ENCODE measurements at regions of chr3 and their contacts with region 1.

Region 1: GRCh38 chr3:142447852-142448823 is at the start of gene XRN1:
- DNase-seq: peak; percentile 94
- ATAC-seq: peak; percentile 98
- H3K4me3 ChIP-seq: peak within 1 kb of the TSS; percentile 85 to 100 (median 98)
- H3K4me3 Mint-ChIP-seq: peak within 1 kb of the TSS; percentile 99
- H3K27ac ChIP-seq: peak within 1 kb of the TSS; percentile 97 to 100
- H3K27ac Mint-ChIP-seq: peak within 1 kb of the TSS; percentile 100
- H3K4me1 ChIP-seq: peaks cover 18 to 24% of the 10 kb centered on the region in 2 donors
- H3K4me1 Mint-ChIP-seq: peaks cover 41% of the 10 kb centered on the region
- H3K27me3 ChIP-seq: no peaks in the 10 kb centered on the region
- H3K27me3 Mint-ChIP-seq: no peaks in the 10 kb centered on the region
- CTCF ChIP-seq: no peak
- total RNA-seq, gene XRN1: 78.6 and 91.8 TPM in 2 replicates

Region 2: GRCh38 chr3:141487521-141488252 is 960.5 kb before region 1 on chr3:
- CTCF ChIA-PET with region 1: no interaction called
- POLR2A ChIA-PET with region 1: no interaction called
- intact Hi-C with region 1: loop called (anchors 5 kb)
- DNase-seq: peak; percentile 91
- ATAC-seq: peak; percentile 70
- H3K4me3 ChIP-seq: peak overlapping the region; percentile 48 to 96 (median 67)
- H3K4me3 Mint-ChIP-seq: peak overlapping the region; percentile 88
- H3K27ac ChIP-seq: peak overlapping the region; percentile 83 to 91
- H3K27ac Mint-ChIP-seq: peak overlapping the region; percentile 93
- H3K4me1 ChIP-seq: peaks cover 45 to 66% of the 10 kb centered on the region in 2 donors
- H3K4me1 Mint-ChIP-seq: peaks cover 70% of the 10 kb centered on the region
- H3K27me3 ChIP-seq: no peaks in the 10 kb centered on the region
- H3K27me3 Mint-ChIP-seq: no peaks in the 10 kb centered on the region
- CTCF ChIP-seq: no peak

Region 3: DNA sequence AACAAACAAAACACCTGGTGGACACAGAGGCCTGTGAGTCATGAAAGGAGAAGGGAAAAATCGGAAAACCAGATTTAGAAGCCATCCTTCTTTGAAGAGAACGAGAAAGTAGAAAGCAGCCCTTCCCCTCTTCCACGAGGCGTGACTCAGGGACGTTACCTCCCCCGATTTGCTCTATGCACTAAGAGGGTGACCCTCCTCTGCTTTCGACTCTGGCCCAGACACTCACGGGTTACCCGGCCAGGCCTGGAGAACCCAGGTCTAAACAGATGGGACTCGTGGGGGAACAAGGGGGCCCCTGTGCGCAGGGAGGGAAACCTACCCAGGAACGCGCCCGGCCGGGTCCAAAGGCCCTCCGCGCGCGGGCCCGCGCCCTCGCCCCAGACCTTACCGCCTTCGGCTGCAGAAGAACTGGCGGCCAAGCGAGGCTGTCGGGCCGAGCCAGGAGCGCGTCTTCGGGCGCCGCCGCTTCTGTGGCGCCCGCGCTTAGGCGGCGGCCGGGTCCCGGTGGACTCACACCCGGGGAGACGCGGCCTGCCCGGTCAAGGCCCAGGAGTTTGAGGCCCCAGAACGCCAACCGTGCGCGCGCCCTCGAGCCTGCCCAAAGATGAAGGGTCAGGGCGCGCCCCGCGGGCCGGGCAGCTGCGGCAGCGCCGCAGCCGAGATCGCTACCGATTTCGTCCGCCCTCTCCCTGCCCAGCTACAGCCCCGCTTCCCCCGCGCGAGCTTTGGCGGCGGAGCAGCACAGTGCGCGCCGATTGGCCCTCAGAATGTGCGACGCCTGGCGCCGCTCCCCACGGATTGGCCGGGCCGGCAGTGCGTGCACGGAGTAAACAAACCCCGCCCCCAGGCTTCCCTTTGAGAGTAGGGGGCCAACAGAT is 299.1 kb before region 1 on chr3 and contains the start of gene TFDP2:
- CTCF ChIA-PET with region 1: no interaction called
- POLR2A ChIA-PET with region 1: no interaction called
- intact Hi-C with region 1: loop called (anchors 1 kb)
- DNase-seq: peak; percentile 88
- ATAC-seq: peak; percentile 98
- H3K4me3 ChIP-seq: peak within 1 kb of the TSS; percentile 56 to 85 (median 74)
- H3K4me3 Mint-ChIP-seq: peak within 1 kb of the TSS; percentile 88
- H3K27ac ChIP-seq: peak within 1 kb of the TSS in 1 of 2 donors; percentile 76
- H3K27ac Mint-ChIP-seq: peak within 1 kb of the TSS; percentile 87
- H3K4me1 ChIP-seq: peaks cover 7 to 15% of the 10 kb centered on the region in 2 donors
- H3K4me1 Mint-ChIP-seq: peaks cover 19% of the 10 kb centered on the region
- H3K27me3 ChIP-seq: no peaks in the 10 kb centered on the region
- H3K27me3 Mint-ChIP-seq: no peaks in the 10 kb centered on the region
- CTCF ChIP-seq: no peak
- total RNA-seq, gene TFDP2: 31.7 and 32.9 TPM in 2 replicates

Region 4: DNA sequence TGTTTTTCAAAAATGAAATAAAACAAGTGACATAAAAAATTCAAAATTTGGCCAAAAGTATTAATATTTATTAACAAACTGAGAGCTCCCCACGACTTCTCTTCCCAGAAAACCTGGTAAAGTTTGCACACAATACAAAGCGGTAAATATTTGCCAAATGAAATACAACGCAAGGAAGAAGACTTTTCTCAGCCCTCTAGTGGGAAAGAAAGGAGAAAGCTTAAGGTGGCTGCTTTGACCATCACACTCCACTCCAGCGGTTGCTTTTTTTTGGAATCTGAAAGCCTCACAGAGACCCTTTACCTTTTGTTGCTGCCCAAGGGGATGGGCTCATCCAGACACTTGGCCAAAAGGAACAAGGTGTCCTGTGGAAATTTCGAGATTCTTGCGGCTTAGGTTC is 221.7 kb before region 1 on chr3:
- CTCF ChIA-PET with region 1: no interaction called
- POLR2A ChIA-PET with region 1: no interaction called
- intact Hi-C with region 1: loop called (anchors 2 kb)
- DNase-seq: no peak
- ATAC-seq: no peak
- H3K4me3 ChIP-seq: no peak overlapping the region
- H3K4me3 Mint-ChIP-seq: peak overlapping the region; percentile 70
- H3K27ac ChIP-seq: no peak overlapping the region
- H3K27ac Mint-ChIP-seq: peak overlapping the region; percentile 32
- H3K4me1 ChIP-seq: peaks cover 3 to 8% of the 10 kb centered on the region in 2 donors
- H3K4me1 Mint-ChIP-seq: peaks cover 9% of the 10 kb centered on the region
- H3K27me3 ChIP-seq: no peaks in the 10 kb centered on the region
- H3K27me3 Mint-ChIP-seq: no peaks in the 10 kb centered on the region
- CTCF ChIP-seq: no peak

Region 5: DNA sequence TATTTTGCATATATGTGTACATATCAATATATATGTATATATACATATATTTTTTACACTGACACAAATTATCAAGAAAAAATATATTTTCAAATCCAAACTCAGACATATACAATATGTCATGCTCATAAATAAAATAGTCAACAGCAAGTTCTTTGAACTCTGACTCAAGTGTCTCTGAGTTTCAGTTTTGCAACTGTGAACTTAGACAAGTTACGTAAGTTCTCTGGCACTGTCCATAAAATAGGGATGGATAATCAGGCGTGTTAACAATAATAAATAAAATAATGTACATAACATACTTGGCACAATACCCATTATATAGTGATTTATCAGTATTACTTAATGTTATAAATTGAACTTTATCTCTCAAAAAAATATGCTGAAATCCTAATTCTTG is 11.8 kb after region 1 on chr3:
- CTCF ChIA-PET with region 1: no interaction called
- POLR2A ChIA-PET with region 1: no interaction called
- intact Hi-C with region 1: no loop called
- DNase-seq: no peak
- ATAC-seq: no peak
- H3K4me3 ChIP-seq: no peak overlapping the region
- H3K4me3 Mint-ChIP-seq: no peak overlapping the region
- H3K27ac ChIP-seq: no peak overlapping the region
- H3K27ac Mint-ChIP-seq: no peak overlapping the region
- H3K4me1 ChIP-seq: no peaks in the 10 kb centered on the region
- H3K4me1 Mint-ChIP-seq: no peaks in the 10 kb centered on the region
- H3K27me3 ChIP-seq: no peaks in the 10 kb centered on the region
- H3K27me3 Mint-ChIP-seq: no peaks in the 10 kb centered on the region
- CTCF ChIP-seq: no peak

Region 6: DNA sequence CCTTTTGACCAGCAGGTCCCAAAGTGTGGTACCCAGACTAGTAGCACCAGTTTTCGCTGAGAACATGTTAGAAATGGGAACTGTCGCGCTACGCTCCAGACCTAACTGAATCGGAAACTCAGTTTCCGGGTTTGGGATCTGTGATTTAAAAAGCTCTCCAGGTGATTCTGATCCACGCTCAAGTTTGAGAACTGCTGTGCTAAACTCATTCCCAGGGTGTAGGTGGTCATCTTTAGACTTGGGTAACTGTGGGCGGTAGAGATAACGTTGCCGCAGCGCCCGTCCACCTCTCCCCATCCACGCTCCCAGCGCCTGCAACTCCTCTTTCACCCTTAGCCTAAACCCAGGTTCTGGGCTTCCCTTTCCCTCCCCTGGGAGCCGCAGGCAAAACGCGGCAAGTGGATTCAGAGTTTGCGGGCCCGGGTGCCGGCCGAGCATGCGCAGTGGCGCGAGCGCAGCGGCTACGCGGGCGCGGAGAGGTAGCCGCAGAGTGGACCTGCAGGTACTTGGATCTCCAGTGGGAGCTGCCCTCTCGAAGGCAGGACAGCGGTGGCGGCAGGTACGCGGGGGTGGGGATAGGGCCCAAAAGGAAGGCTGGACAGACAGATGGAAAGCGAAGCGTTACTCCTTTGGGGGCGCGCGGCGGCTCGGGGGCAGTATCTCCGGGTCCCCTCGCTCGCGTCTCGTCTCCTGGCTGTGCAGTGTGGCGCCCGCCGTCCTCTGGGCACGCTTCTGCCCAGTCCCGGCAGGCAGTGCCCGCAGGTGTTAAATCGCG is 148.0 kb after region 1 on chr3 and contains the start of gene PLS1:
- CTCF ChIA-PET with region 1: no interaction called
- POLR2A ChIA-PET with region 1: no interaction called
- intact Hi-C with region 1: loop called (anchors 5 kb)
- DNase-seq: peak; percentile 87
- ATAC-seq: peak; percentile 87
- H3K4me3 ChIP-seq: peak within 1 kb of the TSS; percentile 68 to 77 (median 72)
- H3K4me3 Mint-ChIP-seq: peak within 1 kb of the TSS; percentile 99
- H3K27ac ChIP-seq: peak within 1 kb of the TSS in 1 of 2 donors; percentile 27
- H3K27ac Mint-ChIP-seq: peak within 1 kb of the TSS; percentile 87
- H3K4me1 ChIP-seq: peaks cover 10 to 15% of the 10 kb centered on the region in 2 donors
- H3K4me1 Mint-ChIP-seq: peaks cover 19% of the 10 kb centered on the region
- H3K27me3 ChIP-seq: peaks cover 0 to 7% (median 2%) of the 10 kb centered on the region in 4 experiments
- H3K27me3 Mint-ChIP-seq: peaks cover 12% of the 10 kb centered on the region
- CTCF ChIP-seq: no peak
- total RNA-seq, gene PLS1: 0.73 and 0.74 TPM in 2 replicates

Region 7: DNA sequence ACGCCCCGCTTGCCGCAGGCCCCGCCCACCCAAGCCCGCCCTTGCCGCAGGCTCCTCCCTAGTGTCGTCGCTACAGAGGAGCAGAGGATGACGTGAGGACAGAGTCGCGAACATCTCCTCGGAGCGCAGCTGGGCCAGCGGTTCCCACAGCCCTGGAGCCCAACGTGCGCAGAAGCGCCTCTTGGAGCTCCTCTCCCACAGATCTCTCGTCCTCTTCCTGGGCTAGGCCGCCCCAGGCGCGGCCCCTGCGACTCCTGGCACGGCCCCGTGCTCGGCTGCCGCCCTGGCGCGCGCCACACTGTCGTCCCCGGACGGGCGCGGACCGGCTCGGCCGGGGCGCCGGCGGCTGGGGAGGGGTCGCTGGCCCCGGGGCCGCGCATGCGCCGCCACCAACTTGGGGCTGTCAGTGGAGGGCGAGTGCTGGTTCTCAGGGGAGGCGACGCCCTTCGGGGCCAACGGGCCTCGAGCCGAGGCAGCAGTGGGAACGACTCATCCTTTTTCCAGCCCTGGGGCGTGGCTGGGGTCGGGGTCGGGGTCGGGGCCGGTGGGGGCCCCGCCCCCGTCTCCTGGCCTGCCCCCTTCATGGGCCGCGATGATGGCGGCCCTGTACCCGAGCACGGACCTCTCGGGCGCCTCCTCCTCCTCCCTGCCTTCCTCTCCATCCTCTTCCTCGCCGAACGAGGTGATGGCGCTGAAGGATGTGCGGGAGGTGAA is 276.0 kb after region 1 on chr3 and contains the start of gene TRPC1:
- CTCF ChIA-PET with region 1: no interaction called
- POLR2A ChIA-PET with region 1: interaction called, 3 read pairs
- intact Hi-C with region 1: loop called (anchors 5 kb)
- DNase-seq: peak; percentile 88
- ATAC-seq: peak; percentile 93
- H3K4me3 ChIP-seq: peak within 1 kb of the TSS; percentile 44 to 76 (median 65)
- H3K4me3 Mint-ChIP-seq: peak within 1 kb of the TSS; percentile 92
- H3K27ac ChIP-seq: peak within 1 kb of the TSS in 1 of 2 donors; percentile 41
- H3K27ac Mint-ChIP-seq: peak within 1 kb of the TSS; percentile 81
- H3K4me1 ChIP-seq: peaks cover 8 to 11% of the 10 kb centered on the region in 2 donors
- H3K4me1 Mint-ChIP-seq: peaks cover 13% of the 10 kb centered on the region
- H3K27me3 ChIP-seq: peaks cover 0 to 13% (median 10%) of the 10 kb centered on the region in 4 experiments
- H3K27me3 Mint-ChIP-seq: peaks cover 33% of the 10 kb centered on the region
- CTCF ChIP-seq: no peak
- total RNA-seq, gene TRPC1: 3.3 and 3.8 TPM in 2 replicates

Region 8: DNA sequence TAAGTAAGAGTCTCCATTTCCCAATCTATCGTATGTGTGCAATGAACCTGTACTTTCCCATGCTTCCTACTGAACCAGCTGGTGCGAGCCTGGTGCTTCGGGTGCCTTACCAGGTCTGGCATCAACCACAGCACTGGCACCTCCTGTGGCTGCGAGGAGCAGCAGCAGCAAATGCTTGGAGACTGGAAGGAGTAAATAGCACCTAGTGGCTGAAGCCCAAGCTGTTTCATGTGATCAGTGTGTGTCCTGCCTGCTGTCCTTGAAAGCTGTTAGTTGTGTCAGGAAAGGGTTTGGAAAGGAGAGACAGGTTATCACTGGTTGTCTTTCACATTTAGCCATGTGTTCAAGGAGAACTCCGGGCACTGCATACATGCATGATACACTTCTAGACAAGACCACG is 408.9 kb after region 1 on chr3:
- CTCF ChIA-PET with region 1: no interaction called
- POLR2A ChIA-PET with region 1: no interaction called
- intact Hi-C with region 1: no loop called
- DNase-seq: no peak
- ATAC-seq: no peak
- H3K4me3 ChIP-seq: no peak overlapping the region
- H3K4me3 Mint-ChIP-seq: no peak overlapping the region
- H3K27ac ChIP-seq: no peak overlapping the region
- H3K27ac Mint-ChIP-seq: no peak overlapping the region
- H3K4me1 ChIP-seq: no peaks in the 10 kb centered on the region
- H3K4me1 Mint-ChIP-seq: no peaks in the 10 kb centered on the region
- H3K27me3 ChIP-seq: peaks cover 0 to 5% (median 0%) of the 10 kb centered on the region in 4 experiments
- H3K27me3 Mint-ChIP-seq: peaks cover 23% of the 10 kb centered on the region
- CTCF ChIP-seq: no peak

Region 9: DNA sequence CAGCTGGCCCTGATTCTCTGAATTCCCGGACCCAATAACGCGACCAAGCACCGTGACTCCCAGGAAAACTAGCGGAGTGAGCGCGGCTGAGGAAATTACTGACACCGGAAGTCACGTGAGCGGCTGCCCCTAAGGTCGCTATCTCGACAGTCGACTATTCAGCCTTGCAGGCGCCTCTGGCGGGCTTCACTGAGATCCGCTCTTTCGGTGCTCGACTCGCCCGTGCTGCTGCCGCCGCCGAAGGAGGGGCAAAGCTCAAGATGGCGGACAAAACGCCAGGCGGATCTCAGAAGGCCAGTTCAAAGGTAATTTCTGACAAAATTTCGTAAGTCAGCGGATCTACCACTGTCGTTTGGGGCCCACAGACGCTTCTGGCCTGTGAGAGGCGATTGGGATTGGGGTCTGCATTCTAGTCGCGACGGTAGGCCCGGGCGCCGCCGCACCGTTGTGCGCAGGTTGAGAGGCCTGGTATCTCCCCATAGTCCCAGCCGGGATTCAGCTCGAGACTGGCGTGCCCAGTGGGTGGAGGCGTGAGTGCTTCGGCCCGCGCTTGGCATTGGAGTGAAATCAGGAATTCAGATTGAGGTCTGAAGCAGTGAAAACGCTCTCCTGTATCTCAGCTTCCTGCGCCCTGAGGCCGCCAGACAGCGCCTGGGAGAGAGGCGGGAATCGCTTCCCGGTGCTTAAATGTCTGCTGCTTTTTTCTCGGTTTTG is 553.4 kb after region 1 on chr3 and contains the start of gene U2SURP:
- CTCF ChIA-PET with region 1: no interaction called
- POLR2A ChIA-PET with region 1: interaction called, 4 read pairs
- intact Hi-C with region 1: loop called (anchors 1 kb)
- DNase-seq: peak; percentile 95
- ATAC-seq: peak; percentile 96
- H3K4me3 ChIP-seq: peak within 1 kb of the TSS; percentile 73 to 100 (median 97)
- H3K4me3 Mint-ChIP-seq: peak within 1 kb of the TSS; percentile 96
- H3K27ac ChIP-seq: peak within 1 kb of the TSS; percentile 86 to 98
- H3K27ac Mint-ChIP-seq: peak within 1 kb of the TSS; percentile 96
- H3K4me1 ChIP-seq: peaks cover 19 to 20% of the 10 kb centered on the region in 2 donors
- H3K4me1 Mint-ChIP-seq: peaks cover 34% of the 10 kb centered on the region
- H3K27me3 ChIP-seq: no peaks in the 10 kb centered on the region
- H3K27me3 Mint-ChIP-seq: no peaks in the 10 kb centered on the region
- CTCF ChIP-seq: no peak
- total RNA-seq, gene U2SURP: 138 and 169 TPM in 2 replicates